Right lobe of liver (tissue), 6 donors: ENCODE measurements at regions of chr22 and their contacts with region 1.

Region 1: DNA sequence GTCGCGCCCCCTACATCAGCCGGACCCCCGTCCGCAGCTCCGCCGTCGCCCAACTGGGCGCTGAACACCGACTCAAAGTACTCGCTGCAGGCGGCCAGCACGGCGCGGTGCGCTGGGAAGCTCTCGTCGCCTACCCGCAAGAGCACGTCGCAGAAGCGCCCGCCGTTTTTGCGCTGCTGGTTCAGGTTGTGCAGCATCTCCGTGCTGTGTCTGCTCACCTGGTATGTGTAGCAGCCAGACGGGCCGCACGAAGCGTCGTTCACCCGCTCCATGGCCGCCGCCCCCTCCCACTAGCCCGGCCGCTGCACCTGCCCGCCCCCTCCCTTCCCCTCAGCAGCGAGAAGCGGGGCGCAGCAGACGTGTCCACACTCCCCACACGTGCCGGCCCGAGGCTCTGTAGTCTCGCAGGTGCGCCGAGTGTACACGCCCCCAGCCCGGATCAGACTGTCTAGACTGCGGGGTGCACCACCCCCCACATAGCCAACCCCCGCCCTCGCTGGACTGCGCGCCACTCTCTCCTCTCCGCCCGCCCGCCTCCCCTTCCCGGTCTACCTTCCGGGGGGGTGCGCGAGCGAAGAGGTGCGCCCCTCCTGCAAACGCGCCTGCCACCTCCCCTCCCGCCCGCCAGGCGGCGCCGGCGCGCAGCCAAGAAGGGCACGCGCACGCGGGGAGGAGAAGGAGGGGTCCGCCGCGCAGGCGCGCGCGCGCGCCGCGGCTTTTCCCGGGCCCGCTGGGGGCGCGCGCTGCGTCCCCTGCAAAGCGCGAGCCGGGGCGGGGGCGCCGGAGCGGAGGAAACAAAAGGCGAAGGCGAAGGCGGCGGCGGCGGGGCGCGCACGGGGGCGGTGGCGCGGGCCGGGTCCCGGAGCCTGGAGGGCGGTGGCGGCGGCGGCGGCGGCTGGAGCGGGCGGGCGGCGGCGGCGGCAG is 553 bp downstream of the PATZ1 start:
- DNase-seq: peak; percentile 85 to 89 (median 88)
- ATAC-seq: peak; percentile 60 to 71 (median 64)
- H3K4me3 ChIP-seq: peak overlapping the region; percentile 58 to 69 (median 65)
- H3K27ac ChIP-seq: peak overlapping the region; percentile 6 to 80 (median 43)
- H3K4me1 ChIP-seq: peaks cover 0 to 29% (median 5%) of the 10 kb centered on the region in 4 donors
- H3K27me3 ChIP-seq: no peaks in the 10 kb centered on the region
- CTCF ChIP-seq: peak; percentile 71 to 98 (median 80)
- POLR2A ChIP-seq: peak; percentile 34

Region 2: DNA sequence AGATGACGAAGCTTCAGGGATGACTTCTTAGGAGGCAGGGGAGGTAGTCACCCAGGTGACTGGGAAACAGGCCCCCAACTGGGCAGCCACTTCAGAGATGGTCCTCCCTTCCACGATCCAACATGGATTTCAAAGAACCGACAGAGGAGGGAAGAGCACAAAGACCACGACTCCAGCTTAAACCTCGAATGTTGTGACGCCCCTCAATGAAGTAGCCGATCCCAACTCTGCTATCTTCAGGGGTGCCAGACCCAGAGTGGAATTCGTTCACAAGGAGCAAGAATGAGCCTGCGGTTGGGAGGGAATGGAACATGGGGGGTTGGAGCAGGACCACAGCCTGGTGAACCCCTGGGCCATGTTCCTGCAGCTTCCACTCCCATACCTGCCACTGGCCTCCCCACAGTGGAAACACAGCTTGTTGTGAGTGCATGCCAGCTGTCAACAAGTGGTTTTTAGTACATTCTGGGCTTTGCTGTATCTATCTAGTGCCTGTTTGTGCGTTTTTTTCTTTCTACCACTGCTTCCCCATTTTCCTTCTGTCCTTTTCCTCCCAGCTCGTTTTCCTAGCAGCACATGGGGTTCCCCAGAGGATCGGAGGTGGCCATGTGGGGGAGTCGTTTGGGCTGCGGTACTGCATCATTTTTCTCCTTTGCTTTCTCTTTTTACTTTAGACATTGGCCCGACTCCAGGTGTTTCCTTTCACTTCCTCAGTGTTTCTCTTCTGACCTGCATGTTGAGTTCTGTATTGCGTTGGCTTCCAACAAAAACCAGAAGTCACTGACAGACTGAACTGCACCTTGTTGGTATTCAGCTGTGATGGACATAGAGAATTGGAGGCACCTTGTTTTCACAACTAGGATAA is 442.9 kb before region 1 on chr22:
- intact Hi-C with region 1: no loop called
- DNase-seq: peak in 1 of 3 donors; percentile 22
- ATAC-seq: no peak
- H3K4me3 ChIP-seq: no peak overlapping the region
- H3K27ac ChIP-seq: no peak overlapping the region
- H3K4me1 ChIP-seq: no peaks in the 10 kb centered on the region
- H3K27me3 ChIP-seq: no peaks in the 10 kb centered on the region
- CTCF ChIP-seq: no peak
- POLR2A ChIP-seq: no peak

Region 3: GRCh38 chr22:31399211-31400028 is 53.8 kb after region 1 on chr22 and contains the start of gene DRG1:
- intact Hi-C with region 1: loop called in 1 of 2 experiments (anchors 10 kb)
- DNase-seq: peak; percentile 98
- ATAC-seq: peak; percentile 97 to 99 (median 98)
- H3K4me3 ChIP-seq: peak within 1 kb of the TSS; percentile 95 to 97 (median 97)
- H3K27ac ChIP-seq: peak within 1 kb of the TSS; percentile 82 to 86 (median 86)
- H3K4me1 ChIP-seq: peaks cover 0 to 25% (median 9%) of the 10 kb centered on the region in 4 donors
- H3K27me3 ChIP-seq: no peaks in the 10 kb centered on the region
- CTCF ChIP-seq: peak in 2 of 4 donors; percentile 5 to 21
- POLR2A ChIP-seq: peak; percentile 94
- total RNA-seq, gene DRG1: 24.2 to 34.7 (median 26.5) TPM